Activated CD4-positive, alpha-beta T cell treated with anti-CD3 and anti-CD28 coated beads, Interleukin-2, amount 10 ng/mL, durations not matched to agents 24 days and 14 days (primary cell): ENCODE measurements at regions of chr11 and their contacts with region 1.

Region 1: GRCh38 chr11:85759915-85760314 is 51.0 kb downstream of the SYTL2 start:
- DNase-seq: no peak
- H3K4me3 Mint-ChIP-seq: no peak overlapping the region
- H3K27ac Mint-ChIP-seq: no peak overlapping the region
- H3K4me1 Mint-ChIP-seq: peaks cover 69% of the 10 kb centered on the region
- H3K27me3 Mint-ChIP-seq: no peaks in the 10 kb centered on the region

Region 2: DNA sequence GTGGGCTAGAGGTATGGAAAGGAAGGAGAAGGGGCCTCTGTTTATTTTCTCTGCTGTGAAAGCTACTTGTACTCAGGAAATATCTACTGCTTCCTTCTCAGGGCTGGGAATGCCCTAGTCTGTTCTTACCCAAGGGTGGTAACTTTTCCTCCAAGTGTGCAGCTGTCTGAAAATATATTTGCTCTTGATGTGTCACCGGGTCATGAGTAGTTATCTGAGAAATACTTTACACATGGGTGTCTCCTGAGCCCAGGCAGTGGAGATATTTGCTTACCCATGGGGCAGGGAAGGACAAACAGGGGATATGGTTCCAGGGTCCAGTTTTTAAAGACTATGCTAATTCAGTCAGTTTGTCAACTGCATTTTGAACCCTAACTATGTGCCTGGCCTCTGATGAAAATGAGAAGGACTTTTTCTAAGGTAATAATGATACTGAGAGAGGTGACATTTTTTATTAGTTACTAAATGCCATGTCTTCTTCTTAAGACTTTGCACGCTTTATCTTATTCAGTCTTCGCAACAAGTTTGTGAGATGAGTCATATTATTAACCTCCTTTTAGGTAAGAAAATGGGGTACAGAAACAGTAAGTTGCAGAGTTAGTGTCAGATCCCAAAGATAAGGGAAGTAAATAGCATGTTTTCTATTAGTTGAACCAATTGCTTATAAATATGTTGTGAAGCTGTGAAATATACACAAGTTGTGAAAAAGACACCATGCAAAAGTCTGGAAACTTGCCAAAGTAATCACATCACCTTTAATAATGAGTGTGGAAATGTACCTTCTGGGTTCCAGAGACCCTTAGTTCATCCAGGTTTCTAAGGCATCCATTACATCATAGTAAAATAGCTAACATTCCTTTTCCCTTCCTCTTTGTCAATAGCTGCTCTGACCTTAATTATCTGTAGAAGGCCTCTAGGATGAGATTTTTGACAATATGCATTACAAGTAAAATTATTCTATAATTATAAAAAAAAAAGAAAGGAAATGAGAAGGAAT is 28.2 kb after region 1 on chr11:
- intact Hi-C with region 1: loop called (anchors 2 kb)
- DNase-seq: no peak
- H3K4me3 Mint-ChIP-seq: peak overlapping the region; percentile 47
- H3K27ac Mint-ChIP-seq: peak overlapping the region; percentile 85
- H3K4me1 Mint-ChIP-seq: peaks cover 50% of the 10 kb centered on the region
- H3K27me3 Mint-ChIP-seq: no peaks in the 10 kb centered on the region

Region 3: DNA sequence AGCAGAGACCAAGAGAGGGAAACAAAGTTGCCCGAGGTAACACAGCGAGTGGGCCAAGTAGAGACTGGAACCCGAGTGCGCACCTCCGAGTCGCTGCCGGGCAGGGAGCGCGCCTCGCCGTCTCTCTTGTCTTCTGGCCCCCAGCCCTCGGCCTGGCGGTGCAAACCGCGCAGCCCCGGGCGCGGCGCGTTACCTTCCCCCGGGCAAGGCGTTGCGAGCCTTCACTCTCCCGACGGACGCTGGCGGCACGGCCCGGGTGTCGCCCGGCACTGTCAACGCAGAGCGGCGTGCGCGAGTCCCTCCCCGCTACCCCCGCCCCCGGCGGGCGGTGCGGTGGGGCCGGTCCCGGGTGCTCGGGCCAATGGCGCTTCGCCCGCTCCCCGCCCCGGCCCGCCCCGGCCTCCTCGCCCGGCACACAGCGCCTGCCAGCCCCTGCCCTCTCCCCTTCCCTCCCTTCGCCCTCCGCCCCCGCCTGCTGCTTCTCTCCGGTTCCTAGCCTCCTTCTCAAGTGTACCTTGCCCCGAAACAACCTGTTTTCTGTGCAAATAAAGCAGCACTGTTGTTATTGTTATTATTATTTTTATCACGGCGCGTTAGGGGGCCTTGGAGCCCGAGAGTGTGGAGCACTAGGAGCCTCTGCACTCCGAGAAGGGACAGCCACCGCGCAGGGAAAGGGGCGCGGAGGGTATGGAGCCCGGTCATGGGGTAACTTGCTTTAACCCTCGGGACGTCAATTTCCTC is 51.1 kb after region 1 on chr11 and contains the start of gene SYTL2:
- intact Hi-C with region 1: loop called (anchors 1 kb)
- DNase-seq: peak; percentile 95
- H3K4me3 Mint-ChIP-seq: peak within 1 kb of the TSS; percentile 90
- H3K27ac Mint-ChIP-seq: peak within 1 kb of the TSS; percentile 78
- H3K4me1 Mint-ChIP-seq: peaks cover 39% of the 10 kb centered on the region
- H3K27me3 Mint-ChIP-seq: peaks cover 11% of the 10 kb centered on the region
- total RNA-seq, gene SYTL2: 13.9 and 14.3 TPM in 2 replicates

Region 4: GRCh38 chr11:86440305-86440716 is 680.4 kb after region 1 on chr11:
- intact Hi-C with region 1: loop called (anchors 10 kb)
- DNase-seq: no peak
- H3K4me3 Mint-ChIP-seq: no peak overlapping the region
- H3K27ac Mint-ChIP-seq: peak overlapping the region; percentile 74
- H3K4me1 Mint-ChIP-seq: peaks cover 47% of the 10 kb centered on the region
- H3K27me3 Mint-ChIP-seq: no peaks in the 10 kb centered on the region